AG04449 (cell line): ENCODE measurements at regions of chr11 and their contacts with region 1.

Region 1: DNA sequence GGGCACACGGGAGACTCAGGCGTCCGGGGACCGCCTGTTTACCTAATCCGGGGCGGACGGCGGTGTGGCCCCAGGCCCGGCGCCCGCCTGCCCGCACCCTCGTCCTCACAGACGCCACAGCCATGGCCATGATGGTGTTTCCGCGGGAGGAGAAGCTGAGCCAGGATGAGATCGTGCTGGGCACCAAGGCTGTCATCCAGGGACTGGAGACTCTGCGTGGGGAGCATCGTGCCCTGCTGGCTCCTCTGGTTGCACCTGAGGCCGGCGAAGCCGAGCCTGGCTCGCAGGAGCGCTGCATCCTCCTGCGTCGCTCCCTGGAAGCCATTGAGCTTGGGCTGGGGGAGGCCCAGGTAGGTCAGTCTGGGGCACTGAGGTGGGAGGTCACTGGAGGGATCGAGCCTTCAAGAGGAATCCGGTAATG is 10.0 kb upstream of the RAB1B start:
- DNase-seq: no peak
- H3K4me3 ChIP-seq: peak overlapping the region; percentile 90
- CTCF ChIP-seq: no peak

Region 2: DNA sequence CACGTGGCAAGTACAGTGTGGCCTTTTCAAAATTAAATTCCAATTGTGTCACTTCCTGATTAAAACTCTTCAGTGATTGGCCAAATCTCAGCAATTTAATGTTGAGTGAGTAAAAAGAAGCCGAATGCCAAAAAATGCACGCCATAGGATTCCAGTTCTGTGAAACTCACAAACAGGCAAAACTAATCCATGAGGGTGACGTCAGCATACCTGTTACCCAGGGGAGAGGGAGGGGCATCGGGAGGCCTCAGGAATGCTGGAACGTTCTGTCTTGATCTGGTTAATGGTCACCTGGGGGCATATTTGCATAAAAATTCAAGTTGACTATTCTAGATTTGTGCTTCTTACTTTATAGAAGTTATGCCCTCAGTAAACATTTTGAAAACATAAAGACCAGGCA is 30.0 kb before region 1 on chr11:
- CTCF ChIA-PET with region 1: interaction called, 11 read pairs
- POLR2A ChIA-PET with region 1: no interaction called
- DNase-seq: no peak
- H3K4me3 ChIP-seq: no peak overlapping the region
- CTCF ChIP-seq: no peak

Region 3: DNA sequence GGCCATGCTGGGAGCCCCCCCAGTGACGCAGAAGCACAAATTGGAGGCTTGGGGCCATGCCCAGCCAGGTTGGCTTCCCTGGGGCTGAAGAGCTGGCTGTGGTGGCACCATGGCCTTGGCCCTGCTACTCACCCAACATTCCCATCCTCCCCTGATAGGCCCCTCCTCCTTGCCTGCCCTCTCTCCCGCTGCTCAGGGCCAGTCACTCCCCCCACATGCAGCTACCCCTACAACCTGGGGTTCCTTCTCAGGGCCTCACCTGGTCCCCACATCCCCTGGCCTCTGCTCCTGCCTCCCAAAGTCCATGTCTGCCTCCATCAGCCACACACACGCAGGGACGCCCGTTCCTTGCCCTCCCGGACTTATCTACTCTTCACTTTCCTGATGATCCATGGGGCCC is 37.5 kb after region 1 on chr11:
- CTCF ChIA-PET with region 1: no interaction called
- POLR2A ChIA-PET with region 1: no interaction called
- DNase-seq: no peak
- H3K4me3 ChIP-seq: no peak overlapping the region
- CTCF ChIP-seq: no peak